Activated naive CD4-positive, alpha-beta T cell treated with anti-CD3 and anti-CD28 coated beads for 36 hours (primary cell): ENCODE measurements at regions of chr1 and their contacts with region 1.

Region 1: DNA sequence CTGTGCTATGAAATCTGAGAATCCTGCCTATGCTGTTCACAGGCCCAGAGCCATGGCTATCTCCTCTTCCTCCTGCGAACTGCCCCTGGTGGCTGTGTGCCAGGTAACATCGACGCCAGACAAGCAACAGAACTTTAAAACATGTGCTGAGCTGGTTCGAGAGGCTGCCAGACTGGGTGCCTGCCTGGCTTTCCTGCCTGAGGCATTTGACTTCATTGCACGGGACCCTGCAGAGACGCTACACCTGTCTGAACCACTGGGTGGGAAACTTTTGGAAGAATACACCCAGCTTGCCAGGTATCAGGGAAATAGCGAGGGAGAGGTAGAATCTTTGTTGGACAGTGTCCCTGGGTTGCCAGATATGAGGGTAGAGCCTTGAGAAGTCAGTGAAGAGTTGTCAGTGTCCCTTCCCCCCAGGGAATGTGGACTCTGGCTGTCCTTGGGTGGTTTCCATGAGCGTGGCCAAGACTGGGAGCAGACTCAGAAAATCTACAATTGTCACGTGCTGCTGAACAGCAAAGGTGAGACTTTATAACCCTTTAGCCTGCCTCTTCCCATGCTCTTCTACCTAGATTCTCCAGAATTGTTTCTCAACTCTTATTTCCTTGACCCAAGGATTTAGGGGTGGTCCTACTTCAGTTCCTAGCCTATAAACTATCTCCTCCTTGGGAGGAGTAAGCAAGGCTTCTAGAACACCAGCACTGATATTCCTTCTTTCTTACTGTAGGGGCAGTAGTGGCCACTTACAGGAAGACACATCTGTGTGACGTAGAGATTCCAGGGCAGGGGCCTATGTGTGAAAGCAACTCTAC is 1.4 kb downstream of the NIT1 start:
- DNase-seq: peak; percentile 86
- H3K4me3 Mint-ChIP-seq: peak overlapping the region; percentile 92
- H3K27ac Mint-ChIP-seq: peak overlapping the region; percentile 88
- H3K4me1 Mint-ChIP-seq: peaks cover 64% of the 10 kb centered on the region
- H3K27me3 Mint-ChIP-seq: no peaks in the 10 kb centered on the region

Region 2: GRCh38 chr1:161153679-161154426 is 34.6 kb after region 1 on chr1 and contains the start of gene UFC1:
- CTCF ChIA-PET with region 1: no interaction called
- intact Hi-C with region 1: loop called (anchors 1 kb)
- DNase-seq: peak; percentile 88
- H3K4me3 Mint-ChIP-seq: peak within 1 kb of the TSS; percentile 95
- H3K27ac Mint-ChIP-seq: peak within 1 kb of the TSS; percentile 99
- H3K4me1 Mint-ChIP-seq: peaks cover 22% of the 10 kb centered on the region
- H3K27me3 Mint-ChIP-seq: no peaks in the 10 kb centered on the region
- total RNA-seq, gene UFC1: 89.4 to 94.9 TPM

Region 3: GRCh38 chr1:161314201-161314981 is 195.1 kb after region 1 on chr1 and contains the start of gene SDHC:
- CTCF ChIA-PET with region 1: no interaction called
- intact Hi-C with region 1: no loop called
- DNase-seq: peak; percentile 89
- H3K4me3 Mint-ChIP-seq: peak within 1 kb of the TSS; percentile 97
- H3K27ac Mint-ChIP-seq: peak within 1 kb of the TSS; percentile 92
- H3K4me1 Mint-ChIP-seq: peaks cover 21% of the 10 kb centered on the region
- H3K27me3 Mint-ChIP-seq: no peaks in the 10 kb centered on the region
- total RNA-seq, gene SDHC: 201 TPM